ENCODE measurements at regions of chr20 and their contacts with region 1.

Region 1: DNA sequence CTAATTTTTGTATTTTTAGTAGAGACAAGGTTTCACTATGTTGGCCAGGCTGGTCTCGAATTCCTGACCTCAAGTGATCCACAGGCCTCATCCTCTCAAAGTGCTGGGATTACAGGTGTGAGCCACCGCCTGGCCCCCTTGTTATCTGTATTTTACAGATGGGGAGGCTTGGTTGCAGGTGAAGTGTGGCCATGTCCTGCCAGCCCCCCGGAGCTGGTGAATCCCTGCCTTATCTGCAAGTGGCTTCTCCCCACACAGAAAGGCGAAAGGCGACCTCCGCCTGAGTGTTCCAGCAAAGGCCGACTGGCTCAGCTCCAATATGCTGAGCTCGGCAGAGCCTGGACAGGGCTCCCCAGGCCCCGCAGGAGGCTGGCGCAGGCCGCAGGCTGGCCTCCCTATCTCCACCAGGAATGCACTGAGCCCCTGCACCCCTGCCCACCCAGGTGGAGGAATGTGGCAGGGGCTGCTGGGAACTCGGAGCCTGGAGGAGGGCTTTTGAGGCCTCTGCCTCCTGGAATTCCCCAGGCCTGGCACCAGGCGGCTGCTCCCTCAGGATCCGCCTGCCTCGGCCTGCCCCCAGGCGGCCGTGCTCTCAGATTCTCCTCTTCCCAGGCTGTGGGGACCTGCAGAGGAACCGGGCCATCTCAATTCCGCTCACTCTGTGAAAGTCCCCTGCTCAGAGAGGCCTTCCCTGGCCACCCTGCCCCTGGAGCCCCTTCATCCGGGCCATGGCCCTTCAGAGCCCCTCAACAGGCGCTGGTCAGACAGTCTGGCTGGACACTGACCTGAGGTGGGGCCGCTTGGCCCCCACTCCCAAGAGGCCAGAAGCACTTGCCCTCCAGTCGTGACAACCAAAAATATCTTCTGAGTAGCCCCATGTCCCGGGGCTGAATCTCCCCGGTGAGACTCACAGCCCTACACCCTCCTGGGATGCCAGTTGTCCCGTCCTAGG is 9.3 kb upstream of the LAMA5 start:
- DNase-seq: no peak

Region 2: GRCh38 chr20:62352402-62353288 is 23.7 kb before region 1 on chr20:
- intact Hi-C with region 1: loop called (anchors 1 kb)
- DNase-seq: peak; percentile 92

Region 3: GRCh38 chr20:62365814-62366309 is 10.5 kb before region 1 on chr20:
- intact Hi-C with region 1: loop called (anchors 2 kb)
- DNase-seq: peak; percentile 74

Measured in cardiac septum (tissue), 1 donor.